Psoas muscle (tissue), 8 donors: ENCODE measurements at regions of chr4 and their contacts with region 1.

Region 1: GRCh38 chr4:151690164-151690870 is 70.5 kb downstream of the GATB start:
- DNase-seq: no peak
- ATAC-seq: no peak
- H3K4me3 ChIP-seq: no peak overlapping the region
- H3K27ac ChIP-seq: no peak overlapping the region
- H3K4me1 ChIP-seq: peaks cover 90% of the 10 kb centered on the region
- H3K27me3 ChIP-seq: no peaks in the 10 kb centered on the region
- CTCF ChIP-seq: no peak

Region 2: GRCh38 chr4:150302553-150302952 is 1387.8 kb before region 1 on chr4:
- intact Hi-C with region 1: no loop called
- DNase-seq: no peak
- ATAC-seq: no peak
- H3K4me3 ChIP-seq: no peak overlapping the region
- H3K27ac ChIP-seq: no peak overlapping the region
- H3K4me1 ChIP-seq: no peaks in the 10 kb centered on the region
- H3K27me3 ChIP-seq: no peaks in the 10 kb centered on the region
- CTCF ChIP-seq: no peak

Region 3: GRCh38 chr4:151641176-151641575 is 49.1 kb before region 1 on chr4:
- intact Hi-C with region 1: loop called in 1 of 2 experiments (anchors 2 kb)
- DNase-seq: no peak
- ATAC-seq: peak; percentile 89 to 92 (median 90)
- H3K4me3 ChIP-seq: no peak overlapping the region
- H3K27ac ChIP-seq: peak overlapping the region; percentile 81
- H3K4me1 ChIP-seq: peaks cover 17% of the 10 kb centered on the region
- H3K27me3 ChIP-seq: no peaks in the 10 kb centered on the region
- CTCF ChIP-seq: no peak

Region 4: GRCh38 chr4:151658959-151659600 is 31.2 kb before region 1 on chr4:
- intact Hi-C with region 1: loop called in 1 of 2 experiments (anchors 5 kb)
- DNase-seq: no peak
- ATAC-seq: peak in 3 of 4 donors; percentile 1 to 46 (median 32)
- H3K4me3 ChIP-seq: no peak overlapping the region
- H3K27ac ChIP-seq: peak overlapping the region; percentile 78
- H3K4me1 ChIP-seq: peaks cover 37% of the 10 kb centered on the region
- H3K27me3 ChIP-seq: no peaks in the 10 kb centered on the region
- CTCF ChIP-seq: no peak

Region 5: GRCh38 chr4:152073351-152074087 is 383.2 kb after region 1 on chr4:
- intact Hi-C with region 1: no loop called
- DNase-seq: no peak
- ATAC-seq: peak in 1 of 4 donors; percentile 35
- H3K4me3 ChIP-seq: no peak overlapping the region
- H3K27ac ChIP-seq: no peak overlapping the region
- H3K4me1 ChIP-seq: no peaks in the 10 kb centered on the region
- H3K27me3 ChIP-seq: no peaks in the 10 kb centered on the region
- CTCF ChIP-seq: no peak